CD4-positive, alpha-beta T cell (primary cell): ENCODE measurements at regions of chr2 and their contacts with region 1.

Region 1: GRCh38 chr2:140177086-140177485 is 1396.9 kb upstream of the NXPH2 start:
- DNase-seq: no peak
- ATAC-seq: no peak
- H3K4me3 ChIP-seq: no peak overlapping the region
- H3K4me3 Mint-ChIP-seq: no peak overlapping the region
- H3K27ac ChIP-seq: no peak overlapping the region
- H3K27ac Mint-ChIP-seq: no peak overlapping the region
- H3K4me1 ChIP-seq: no peaks in the 10 kb centered on the region
- H3K4me1 Mint-ChIP-seq: no peaks in the 10 kb centered on the region
- H3K27me3 ChIP-seq: no peaks in the 10 kb centered on the region
- H3K27me3 Mint-ChIP-seq: no peaks in the 10 kb centered on the region
- CTCF ChIP-seq: no peak

Region 2: DNA sequence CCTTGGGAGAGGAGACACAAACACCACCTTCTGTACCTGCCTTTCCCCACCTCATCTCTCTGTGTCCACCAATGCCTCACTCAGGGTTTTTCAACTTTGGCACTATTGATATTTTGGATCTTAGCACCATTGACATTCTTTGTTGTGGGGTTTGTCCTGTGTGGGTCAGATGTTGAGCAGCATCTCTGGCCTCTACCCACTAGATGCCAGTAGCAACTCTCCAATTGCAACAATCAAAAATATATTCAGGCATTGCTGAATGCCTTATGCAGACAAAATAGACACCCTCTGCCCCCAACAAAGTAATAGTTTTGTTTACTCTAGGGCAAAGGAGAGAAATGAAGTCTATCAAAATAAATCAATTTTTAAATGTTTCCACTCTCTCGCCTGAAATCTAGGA is 12.6 kb before region 1 on chr2:
- CTCF ChIA-PET with region 1: no interaction called
- POLR2A ChIA-PET with region 1: no interaction called
- intact Hi-C with region 1: loop called in 1 of 2 experiments (anchors 1 kb)
- DNase-seq: no peak
- ATAC-seq: no peak
- H3K4me3 ChIP-seq: no peak overlapping the region
- H3K4me3 Mint-ChIP-seq: no peak overlapping the region
- H3K27ac ChIP-seq: no peak overlapping the region
- H3K27ac Mint-ChIP-seq: no peak overlapping the region
- H3K4me1 ChIP-seq: no peaks in the 10 kb centered on the region
- H3K4me1 Mint-ChIP-seq: no peaks in the 10 kb centered on the region
- H3K27me3 ChIP-seq: no peaks in the 10 kb centered on the region
- H3K27me3 Mint-ChIP-seq: no peaks in the 10 kb centered on the region
- CTCF ChIP-seq: no peak